ENCODE measurements at regions of chr13 and their contacts with region 1.

Region 1: GRCh38 chr13:94362411-94362909 is 117.0 kb downstream of the DCT start:
- DNase-seq: peak; percentile 53
- ATAC-seq: peak; percentile 93
- H3K4me3 ChIP-seq: no peak overlapping the region
- H3K27ac ChIP-seq: no peak overlapping the region
- H3K4me1 ChIP-seq: no peaks in the 10 kb centered on the region
- H3K27me3 ChIP-seq: no peaks in the 10 kb centered on the region
- CTCF ChIP-seq: peak; percentile 75

Region 2: DNA sequence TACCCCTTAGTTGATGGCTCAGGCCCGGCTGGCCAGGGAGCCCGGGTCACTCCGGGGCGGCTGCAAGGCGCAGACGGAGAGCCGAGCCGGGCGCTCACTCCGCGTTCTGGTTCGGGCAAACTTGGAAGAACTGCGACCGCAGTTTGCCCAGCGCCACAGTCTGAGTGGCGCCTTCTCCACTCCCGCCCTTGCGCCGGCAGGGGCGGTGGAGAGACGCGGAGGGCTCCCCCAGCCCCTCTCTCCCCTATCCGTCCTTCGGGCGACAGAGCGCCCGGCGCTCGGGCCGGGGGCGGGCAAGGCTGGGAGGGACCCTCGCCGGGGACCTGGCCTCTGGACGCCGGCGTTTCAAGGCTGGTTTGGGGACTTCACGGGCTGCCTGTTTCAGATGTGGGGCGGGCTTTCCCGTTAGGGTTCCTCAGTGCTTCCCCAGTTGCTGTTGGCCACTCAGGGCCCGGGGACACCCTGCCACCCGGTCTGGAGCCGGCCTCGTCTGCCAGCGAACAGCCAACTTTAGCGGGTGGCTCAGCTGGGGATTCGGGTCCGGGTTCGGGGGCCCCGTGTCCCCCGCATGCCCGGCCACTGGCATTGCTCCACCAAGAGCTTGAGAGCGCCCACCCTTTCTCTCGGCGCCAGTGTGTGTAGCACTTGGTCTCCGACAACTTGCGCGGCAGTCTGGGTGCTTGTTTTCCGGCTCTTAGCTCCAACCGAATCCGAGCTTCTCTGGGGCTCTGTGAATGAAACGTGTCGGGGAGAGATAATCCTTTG is 1134.4 kb before region 1 on chr13:
- CTCF ChIA-PET with region 1: no interaction called
- POLR2A ChIA-PET with region 1: no interaction called
- in situ Hi-C with region 1: no loop called
- intact Hi-C with region 1: loop called (anchors 10 kb)
- DNase-seq: no peak
- ATAC-seq: peak; percentile 84
- H3K4me3 ChIP-seq: peak overlapping the region; percentile 57 to 60
- H3K27ac ChIP-seq: peak overlapping the region; percentile 51; the same call in 1 of the 2 replicates
- H3K4me1 ChIP-seq: no peaks in the 10 kb centered on the region
- H3K27me3 ChIP-seq: no peaks in the 10 kb centered on the region; the same call in none of the 2 replicates
- CTCF ChIP-seq: peak; percentile 22

Region 3: GRCh38 chr13:93775507-93776108 is 586.9 kb before region 1 on chr13:
- CTCF ChIA-PET with region 1: no interaction called
- POLR2A ChIA-PET with region 1: no interaction called
- in situ Hi-C with region 1: no loop called
- intact Hi-C with region 1: no loop called
- DNase-seq: no peak
- ATAC-seq: no peak
- H3K4me3 ChIP-seq: no peak overlapping the region
- H3K27ac ChIP-seq: no peak overlapping the region
- H3K4me1 ChIP-seq: no peaks in the 10 kb centered on the region
- H3K27me3 ChIP-seq: no peaks in the 10 kb centered on the region
- CTCF ChIP-seq: no peak

Region 4: DNA sequence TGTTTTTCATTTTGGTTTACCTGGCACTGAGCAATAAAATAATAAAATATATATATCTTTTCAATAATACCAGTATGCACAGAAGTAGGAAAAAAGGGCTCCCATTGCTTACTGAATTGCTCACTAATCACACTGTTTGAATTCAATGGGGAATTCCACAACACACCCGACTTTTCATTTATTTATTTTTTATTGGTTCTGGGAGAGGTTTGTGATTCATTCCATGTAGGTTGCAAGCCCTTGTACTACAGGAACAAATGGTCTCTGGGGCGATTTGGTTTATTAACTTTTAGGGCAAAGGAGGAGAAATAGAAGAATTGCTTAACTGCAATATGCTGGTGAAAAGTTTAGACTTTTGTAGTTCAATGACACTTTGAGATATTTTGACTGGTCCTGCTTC is 90.4 kb before region 1 on chr13:
- CTCF ChIA-PET with region 1: no interaction called
- POLR2A ChIA-PET with region 1: no interaction called
- in situ Hi-C with region 1: no loop called
- intact Hi-C with region 1: loop called (anchors 5 kb)
- DNase-seq: no peak
- ATAC-seq: no peak
- H3K4me3 ChIP-seq: no peak overlapping the region
- H3K27ac ChIP-seq: no peak overlapping the region
- H3K4me1 ChIP-seq: no peaks in the 10 kb centered on the region
- H3K27me3 ChIP-seq: no peaks in the 10 kb centered on the region
- CTCF ChIP-seq: no peak

Region 5: DNA sequence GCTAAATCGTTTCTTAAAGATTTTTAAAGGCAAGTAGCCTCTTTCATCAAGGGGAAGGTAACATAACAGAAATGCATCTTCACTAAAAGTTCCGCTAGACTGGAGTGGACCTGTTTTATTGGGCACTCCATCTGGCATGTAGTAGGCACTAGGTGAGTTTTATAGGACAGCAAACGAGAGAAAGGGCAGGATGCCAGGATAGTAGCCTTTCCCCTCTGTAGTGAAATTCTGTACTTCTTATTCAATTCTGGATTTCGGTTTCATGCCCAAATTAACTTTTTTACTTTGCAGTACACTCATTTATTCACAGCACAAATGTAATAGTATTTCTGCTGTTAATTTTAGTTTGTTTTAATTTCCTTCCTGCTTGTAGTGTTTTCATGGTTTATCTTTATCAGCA is 284.4 kb after region 1 on chr13:
- CTCF ChIA-PET with region 1: no interaction called
- POLR2A ChIA-PET with region 1: no interaction called
- in situ Hi-C with region 1: no loop called
- intact Hi-C with region 1: no loop called
- DNase-seq: no peak
- ATAC-seq: no peak
- H3K4me3 ChIP-seq: no peak overlapping the region
- H3K27ac ChIP-seq: no peak overlapping the region
- H3K4me1 ChIP-seq: no peaks in the 10 kb centered on the region
- H3K27me3 ChIP-seq: no peaks in the 10 kb centered on the region
- CTCF ChIP-seq: no peak

Region 6: DNA sequence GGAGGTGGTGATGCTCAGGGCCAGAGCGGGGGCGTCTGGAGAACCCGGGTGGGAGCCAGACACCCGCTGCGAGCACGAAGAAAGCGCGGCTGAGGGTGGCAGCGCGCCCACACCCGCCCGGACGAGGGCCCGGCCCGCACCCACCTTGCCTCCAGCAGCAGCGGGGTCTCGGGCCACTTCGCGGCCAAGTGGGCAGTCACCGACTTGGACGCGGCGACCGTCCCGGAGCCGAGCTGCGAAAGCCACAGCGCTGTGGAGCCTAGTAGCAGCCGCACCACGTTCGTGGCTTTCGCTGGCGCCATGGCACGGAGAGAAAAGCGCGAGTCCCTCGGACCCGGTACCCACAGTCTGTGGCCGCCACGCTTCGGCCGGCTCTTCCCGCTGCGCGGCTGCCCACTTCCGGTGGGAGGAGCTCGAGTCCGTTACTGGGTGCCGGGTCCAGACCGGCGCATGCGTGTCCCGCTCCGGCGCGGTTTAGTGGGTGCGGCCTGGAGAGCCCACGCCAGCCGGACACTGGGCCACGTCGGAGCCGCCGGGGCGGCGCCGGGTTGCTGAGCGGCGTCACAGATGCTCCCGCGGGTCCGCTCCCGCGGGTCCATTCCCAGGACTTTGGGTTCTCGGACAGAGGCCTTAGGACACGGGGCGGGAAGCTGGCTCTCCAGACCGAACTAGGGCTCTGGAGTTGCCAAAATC is 1690.7 kb after region 1 on chr13 and contains the start of gene UGGT2:
- CTCF ChIA-PET with region 1: no interaction called
- POLR2A ChIA-PET with region 1: no interaction called
- in situ Hi-C with region 1: no loop called
- intact Hi-C with region 1: no loop called
- DNase-seq: no peak
- ATAC-seq: peak; percentile 100
- H3K4me3 ChIP-seq: peak within 1 kb of the TSS; percentile 86 to 92
- H3K27ac ChIP-seq: peak within 1 kb of the TSS; percentile 84
- H3K4me1 ChIP-seq: no peaks in the 10 kb centered on the region
- H3K27me3 ChIP-seq: peaks cover 2% of the 10 kb centered on the region; the same call in 1 of the 2 replicates
- CTCF ChIP-seq: no peak
- total RNA-seq, gene UGGT2: 22.9 TPM